Lower leg skin (tissue), 4 donors: ENCODE measurements at regions of chr9 and their contacts with region 1.

Region 1: DNA sequence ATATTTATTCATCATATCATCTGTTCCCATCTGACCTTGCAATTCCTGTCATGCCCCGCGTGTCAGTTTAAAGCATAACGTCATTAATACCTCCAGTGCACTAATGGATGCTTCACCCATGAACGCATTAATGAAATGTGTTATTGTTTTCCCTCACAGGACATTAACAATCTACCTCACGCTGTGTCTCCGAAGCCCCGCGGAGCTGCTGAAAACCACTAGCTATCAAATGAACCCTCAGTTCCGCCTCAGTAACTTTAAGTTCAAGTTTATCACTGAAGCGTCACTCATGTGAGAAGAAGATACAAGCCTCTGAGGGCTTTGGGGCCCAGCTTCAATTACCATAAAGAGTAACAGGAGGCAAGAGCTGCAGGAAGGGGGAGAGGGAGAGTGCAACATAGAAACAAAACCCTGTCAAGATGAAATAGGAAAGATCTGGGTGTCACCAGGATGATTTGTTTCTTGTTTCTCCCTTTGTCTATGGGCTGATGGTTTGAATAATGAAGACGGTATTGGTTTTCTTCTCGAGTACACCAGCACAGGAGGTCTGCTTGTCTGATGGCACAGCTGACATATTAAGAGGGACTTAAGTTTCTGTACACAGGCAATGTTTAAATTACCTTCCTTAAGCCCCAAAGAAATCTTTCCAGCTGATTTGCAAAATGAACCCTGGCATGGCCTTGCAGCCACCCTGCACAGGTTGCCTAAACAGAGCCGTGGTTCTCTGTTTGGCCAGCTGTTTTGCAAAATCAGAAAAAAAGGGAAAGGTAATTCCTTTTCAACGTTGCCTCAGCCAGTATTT is 139.3 kb downstream of the RASEF start:
- DNase-seq: no peak
- H3K4me3 ChIP-seq: no peak overlapping the region
- CTCF ChIP-seq: no peak
- POLR2A ChIP-seq: no peak

Region 2: GRCh38 chr9:82939451-82939850 is 15.8 kb after region 1 on chr9:
- intact Hi-C with region 1: no loop called
- DNase-seq: no peak
- H3K4me3 ChIP-seq: no peak overlapping the region
- CTCF ChIP-seq: no peak
- POLR2A ChIP-seq: no peak

Region 3: DNA sequence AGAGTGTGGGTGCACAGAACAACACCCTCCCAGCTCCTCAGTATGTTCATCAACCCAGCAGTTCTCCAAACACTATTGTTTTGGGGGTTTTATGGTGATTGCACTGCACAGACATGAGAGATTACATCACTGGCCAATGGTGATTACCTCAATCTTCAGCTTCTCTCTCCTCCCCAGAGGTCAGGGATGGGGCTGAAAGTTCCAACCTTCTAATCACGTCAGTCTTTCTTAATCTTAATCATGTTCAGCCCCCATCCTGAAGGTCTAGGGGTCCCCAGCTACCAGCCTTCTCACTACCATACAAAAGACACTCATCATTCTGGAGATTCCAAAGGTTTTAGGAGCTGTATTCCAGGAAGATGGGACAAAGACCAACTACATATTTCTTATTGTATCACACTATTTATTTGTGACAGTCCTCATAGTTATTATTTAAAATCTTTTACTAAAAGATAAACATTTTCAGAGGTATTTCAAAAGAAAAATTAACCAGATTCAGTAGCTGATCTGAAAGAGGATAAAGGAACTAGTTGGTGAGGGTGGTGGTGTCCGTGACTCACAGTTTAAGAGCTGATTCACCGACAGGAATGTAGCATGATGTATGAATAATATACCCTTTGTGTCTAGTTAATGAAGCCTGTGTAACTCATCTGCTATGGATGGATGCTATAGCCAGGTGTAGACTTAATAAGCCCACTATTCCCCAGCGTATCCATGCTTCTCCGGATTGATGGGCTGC is 103.7 kb after region 1 on chr9:
- intact Hi-C with region 1: loop called (anchors 10 kb)
- DNase-seq: no peak
- H3K4me3 ChIP-seq: no peak overlapping the region
- CTCF ChIP-seq: no peak
- POLR2A ChIP-seq: no peak